Aorta (tissue), 5 donors: ENCODE measurements at regions of chr11 and their contacts with region 1.

Region 1: DNA sequence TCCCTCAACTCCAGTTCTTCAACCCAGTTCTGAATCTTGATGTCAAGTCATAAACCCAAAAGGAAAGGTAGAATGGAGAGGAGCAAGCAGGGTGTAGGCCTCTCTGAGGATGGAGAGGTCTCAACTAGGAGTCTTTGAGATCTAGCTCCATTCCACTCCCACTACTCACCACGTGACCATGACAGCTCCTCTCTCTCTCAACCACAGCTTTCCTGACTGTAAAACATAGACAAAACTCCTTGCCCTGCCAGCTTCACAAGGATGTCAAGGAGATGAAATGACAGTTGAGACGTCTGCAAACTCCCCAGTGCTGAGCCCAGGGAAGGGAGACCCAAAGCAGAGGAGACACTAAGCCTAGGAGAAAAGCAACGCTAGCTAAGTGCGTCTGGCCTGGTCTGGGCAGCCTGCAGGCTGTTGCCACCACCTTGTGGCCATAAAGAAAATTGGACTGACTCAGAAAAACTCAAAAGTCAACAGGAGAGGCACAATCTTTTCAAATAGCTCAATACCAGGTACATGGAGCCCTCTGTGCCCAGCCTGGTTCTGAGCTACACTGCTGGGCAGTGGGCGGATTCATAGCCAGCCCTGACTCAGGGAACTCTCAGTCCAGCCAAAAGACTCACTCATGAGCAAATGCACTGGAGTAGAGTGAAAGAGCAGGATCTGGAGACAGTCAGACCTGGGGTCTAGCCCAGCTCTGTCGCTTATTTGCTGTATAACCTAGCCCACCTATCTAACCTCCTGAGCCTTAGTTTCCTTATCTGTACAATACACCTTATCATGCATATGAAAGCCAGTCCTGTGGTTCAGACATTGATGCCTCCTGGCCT is 3.4 kb downstream of the CLPB start:
- DNase-seq: no peak
- ATAC-seq: no peak
- H3K4me3 ChIP-seq: no peak overlapping the region
- H3K27ac ChIP-seq: no peak overlapping the region
- H3K4me1 ChIP-seq: no peaks in the 10 kb centered on the region
- H3K27me3 ChIP-seq: no peaks in the 10 kb centered on the region

Region 2: GRCh38 chr11:72222907-72223614 is 207.9 kb before region 1 on chr11:
- intact Hi-C with region 1: loop called in 1 of 2 experiments (anchors 5 kb)
- DNase-seq: peak; percentile 97
- ATAC-seq: peak; percentile 94
- H3K4me3 ChIP-seq: peak overlapping the region; percentile 91 to 98
- H3K27ac ChIP-seq: peak overlapping the region; percentile 85 to 89
- H3K4me1 ChIP-seq: no peaks in the 10 kb centered on the region
- H3K27me3 ChIP-seq: no peaks in the 10 kb centered on the region